Sciatic nerve (tissue), 2 donors: ENCODE measurements at regions of chr16 and their contacts with region 1.

Region 1: DNA sequence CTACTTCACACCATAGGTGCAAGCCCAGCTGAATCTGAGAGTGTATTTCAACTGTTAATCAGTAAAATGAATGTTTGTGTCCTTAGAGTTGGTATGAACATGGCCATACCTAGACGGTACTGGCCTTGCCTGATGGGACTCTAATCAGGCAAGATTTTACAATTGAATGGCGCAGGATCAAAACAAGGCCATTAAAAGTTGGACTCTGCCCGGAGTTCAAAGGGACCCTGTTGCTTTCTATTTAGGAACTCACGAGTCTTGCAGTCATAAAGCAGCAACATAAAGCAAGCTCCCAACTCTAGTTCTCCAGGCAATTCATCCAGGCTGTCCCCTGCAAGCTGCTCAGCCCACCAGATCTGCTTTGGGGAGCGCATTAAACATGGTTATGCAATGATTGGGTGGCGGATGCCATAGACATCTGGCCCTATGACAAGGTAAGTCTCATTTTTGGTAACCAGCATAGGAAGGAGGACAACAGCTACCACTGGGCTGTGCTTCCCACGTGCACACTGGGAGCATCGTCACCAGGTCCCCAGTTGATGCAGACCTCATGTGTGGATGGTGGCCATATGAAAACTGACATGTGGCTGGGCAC is 8.8 kb downstream of the TMEM186 start:
- DNase-seq: no peak
- ATAC-seq: no peak

Region 2: DNA sequence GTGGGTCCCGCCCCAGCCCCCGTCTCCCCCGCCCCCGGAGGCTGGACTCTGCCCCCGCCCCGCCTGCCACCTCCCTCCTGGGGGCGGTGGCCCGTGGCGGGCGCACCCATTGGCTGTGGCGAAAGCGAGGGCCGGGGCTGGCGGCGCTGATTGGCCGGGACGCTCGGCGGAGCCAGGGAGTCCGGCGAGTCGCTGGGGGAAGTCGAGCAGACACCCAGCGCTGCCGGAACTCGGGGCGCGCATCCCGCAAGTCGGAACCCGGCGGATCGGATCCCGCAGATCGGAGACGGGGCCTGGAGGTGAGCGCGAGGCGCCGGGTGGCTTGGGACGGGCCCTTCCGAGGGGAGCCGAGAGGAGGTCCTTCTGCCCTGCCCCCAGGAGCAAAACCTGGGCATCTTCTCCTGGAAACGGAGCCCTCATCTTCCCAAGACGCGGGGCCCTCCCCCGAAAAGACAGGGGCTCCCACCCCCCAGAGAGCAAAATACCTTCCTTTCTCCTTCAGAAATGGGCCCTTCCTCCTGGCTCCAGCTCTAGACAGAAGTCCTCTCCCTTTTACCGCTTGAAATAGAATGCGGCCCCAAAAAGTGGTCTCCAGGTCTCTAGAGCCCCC is 114.2 kb before region 1 on chr16 and contains the start of gene ABAT:
- intact Hi-C with region 1: loop called (anchors 10 kb)
- DNase-seq: peak; percentile 93
- ATAC-seq: peak; percentile 100
- total RNA-seq, gene ABAT: 24.2 TPM